ENCODE measurements at regions of chr10 and their contacts with region 1.

Region 1: DNA sequence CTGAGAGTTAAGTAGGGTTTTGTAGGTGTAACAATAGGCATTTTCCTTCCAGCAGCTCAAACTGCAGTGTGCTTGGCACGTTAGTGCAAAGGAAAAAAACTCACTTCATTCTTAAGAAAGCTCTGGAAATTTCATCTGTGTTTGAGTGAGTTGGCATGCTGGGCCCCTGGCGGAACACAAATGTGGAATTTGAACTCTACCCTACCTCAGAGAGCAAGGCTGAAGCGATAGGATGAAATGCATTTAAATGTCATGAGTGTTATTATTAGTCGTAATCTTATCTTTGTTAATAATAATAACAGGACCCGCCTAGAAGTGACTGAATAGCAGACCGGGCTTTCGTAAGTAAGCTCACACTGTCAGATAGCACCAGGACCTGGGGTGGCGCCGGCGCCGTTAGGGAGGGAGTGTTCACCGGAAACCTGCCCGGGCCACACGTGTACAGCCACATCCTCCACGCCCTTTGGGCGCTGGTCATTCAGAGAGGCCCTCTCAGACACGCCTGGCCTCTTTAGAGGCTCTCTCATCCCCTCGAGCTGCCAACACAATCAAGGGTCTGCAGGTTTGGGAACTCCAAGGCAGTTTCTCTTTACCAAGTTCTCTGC is 63.5 kb downstream of the GRK5 start:
- DNase-seq: peak; percentile 77
- ATAC-seq: peak; percentile 39
- H3K4me3 ChIP-seq: peak overlapping the region in 4 of 5 experiments; percentile 15 to 42 (median 31)
- H3K4me3 Mint-ChIP-seq: peak overlapping the region; percentile 73
- H3K27ac ChIP-seq: peak overlapping the region; percentile 98 to 99
- H3K27ac Mint-ChIP-seq: peak overlapping the region; percentile 97
- H3K4me1 ChIP-seq: peaks cover 54 to 78% of the 10 kb centered on the region in 2 donors
- H3K4me1 Mint-ChIP-seq: peaks cover 76% of the 10 kb centered on the region
- H3K27me3 ChIP-seq: no peaks in the 10 kb centered on the region
- H3K27me3 Mint-ChIP-seq: no peaks in the 10 kb centered on the region
- CTCF ChIP-seq: no peak

Region 2: GRCh38 chr10:119283818-119284217 is 13.0 kb after region 1 on chr10:
- CTCF ChIA-PET with region 1: interaction called, 5 read pairs
- POLR2A ChIA-PET with region 1: interaction called, 14 read pairs
- intact Hi-C with region 1: loop called (anchors 1 kb)
- DNase-seq: peak; percentile 78
- ATAC-seq: peak; percentile 93
- H3K4me3 ChIP-seq: no peak overlapping the region
- H3K4me3 Mint-ChIP-seq: peak overlapping the region; percentile 63
- H3K27ac ChIP-seq: peak overlapping the region; percentile 65 to 74
- H3K27ac Mint-ChIP-seq: peak overlapping the region; percentile 85
- H3K4me1 ChIP-seq: peaks cover 47 to 60% of the 10 kb centered on the region in 2 donors
- H3K4me1 Mint-ChIP-seq: peaks cover 81% of the 10 kb centered on the region
- H3K27me3 ChIP-seq: no peaks in the 10 kb centered on the region
- H3K27me3 Mint-ChIP-seq: no peaks in the 10 kb centered on the region
- CTCF ChIP-seq: no peak

Region 3: DNA sequence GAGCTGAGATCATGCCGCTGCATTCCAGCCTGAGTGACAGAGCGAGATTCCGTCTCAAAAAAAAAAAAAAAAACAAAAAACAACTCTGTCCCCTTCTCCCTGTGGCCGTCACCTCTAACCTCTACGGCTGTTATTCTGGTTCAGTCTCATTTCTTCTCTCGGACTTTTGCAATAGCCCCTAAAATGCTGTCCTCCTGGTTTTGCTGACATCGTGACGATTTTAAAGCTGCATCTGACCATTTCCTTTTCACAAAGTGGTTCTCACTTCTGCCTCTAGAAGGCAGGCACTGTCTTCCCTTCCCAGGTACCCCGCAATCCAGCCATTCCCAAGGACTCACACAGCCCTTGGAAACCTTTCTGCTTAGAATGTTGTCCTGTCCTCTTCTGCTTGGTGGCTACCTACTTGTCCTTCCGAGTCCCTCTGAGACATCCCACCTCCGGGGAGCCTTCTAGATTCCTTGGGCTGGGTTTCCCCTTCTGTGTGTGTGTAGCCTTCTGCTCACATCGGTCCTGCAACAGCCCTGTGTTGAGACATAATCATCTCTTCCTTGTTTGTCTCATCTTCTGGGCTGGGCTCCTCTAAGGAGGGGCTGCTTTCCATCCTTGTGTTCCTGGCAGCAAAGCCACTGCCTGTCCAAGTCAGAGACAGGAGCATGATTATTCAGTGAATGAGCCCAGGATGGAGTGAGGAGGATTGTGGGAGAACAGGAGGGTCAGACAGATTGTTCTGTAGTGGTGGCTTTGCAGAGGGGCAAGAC is 19.6 kb after region 1 on chr10:
- CTCF ChIA-PET with region 1: interaction called, 3 read pairs
- POLR2A ChIA-PET with region 1: interaction called, 13 read pairs
- intact Hi-C with region 1: no loop called
- DNase-seq: no peak
- ATAC-seq: no peak
- H3K4me3 ChIP-seq: no peak overlapping the region
- H3K4me3 Mint-ChIP-seq: peak overlapping the region; percentile 13
- H3K27ac ChIP-seq: peak overlapping the region in 1 of 2 donors; percentile 9
- H3K27ac Mint-ChIP-seq: peak overlapping the region; percentile 76
- H3K4me1 ChIP-seq: peaks cover 60 to 67% of the 10 kb centered on the region in 2 donors
- H3K4me1 Mint-ChIP-seq: peaks cover 70% of the 10 kb centered on the region
- H3K27me3 ChIP-seq: no peaks in the 10 kb centered on the region
- H3K27me3 Mint-ChIP-seq: no peaks in the 10 kb centered on the region
- CTCF ChIP-seq: no peak

Region 4: GRCh38 chr10:120017733-120018417 is 747.0 kb after region 1 on chr10:
- CTCF ChIA-PET with region 1: no interaction called
- POLR2A ChIA-PET with region 1: no interaction called
- intact Hi-C with region 1: no loop called
- DNase-seq: no peak
- ATAC-seq: no peak
- H3K4me3 ChIP-seq: no peak overlapping the region
- H3K4me3 Mint-ChIP-seq: no peak overlapping the region
- H3K27ac ChIP-seq: no peak overlapping the region
- H3K27ac Mint-ChIP-seq: no peak overlapping the region
- H3K4me1 ChIP-seq: no peaks in the 10 kb centered on the region
- H3K4me1 Mint-ChIP-seq: no peaks in the 10 kb centered on the region
- H3K27me3 ChIP-seq: peaks cover 0 to 3% (median 0%) of the 10 kb centered on the region in 4 experiments
- H3K27me3 Mint-ChIP-seq: peaks cover 40% of the 10 kb centered on the region
- CTCF ChIP-seq: no peak

Measured in B cell (primary cell).